ENCODE measurements at regions of chr19 and their contacts with region 1.

Region 1: DNA sequence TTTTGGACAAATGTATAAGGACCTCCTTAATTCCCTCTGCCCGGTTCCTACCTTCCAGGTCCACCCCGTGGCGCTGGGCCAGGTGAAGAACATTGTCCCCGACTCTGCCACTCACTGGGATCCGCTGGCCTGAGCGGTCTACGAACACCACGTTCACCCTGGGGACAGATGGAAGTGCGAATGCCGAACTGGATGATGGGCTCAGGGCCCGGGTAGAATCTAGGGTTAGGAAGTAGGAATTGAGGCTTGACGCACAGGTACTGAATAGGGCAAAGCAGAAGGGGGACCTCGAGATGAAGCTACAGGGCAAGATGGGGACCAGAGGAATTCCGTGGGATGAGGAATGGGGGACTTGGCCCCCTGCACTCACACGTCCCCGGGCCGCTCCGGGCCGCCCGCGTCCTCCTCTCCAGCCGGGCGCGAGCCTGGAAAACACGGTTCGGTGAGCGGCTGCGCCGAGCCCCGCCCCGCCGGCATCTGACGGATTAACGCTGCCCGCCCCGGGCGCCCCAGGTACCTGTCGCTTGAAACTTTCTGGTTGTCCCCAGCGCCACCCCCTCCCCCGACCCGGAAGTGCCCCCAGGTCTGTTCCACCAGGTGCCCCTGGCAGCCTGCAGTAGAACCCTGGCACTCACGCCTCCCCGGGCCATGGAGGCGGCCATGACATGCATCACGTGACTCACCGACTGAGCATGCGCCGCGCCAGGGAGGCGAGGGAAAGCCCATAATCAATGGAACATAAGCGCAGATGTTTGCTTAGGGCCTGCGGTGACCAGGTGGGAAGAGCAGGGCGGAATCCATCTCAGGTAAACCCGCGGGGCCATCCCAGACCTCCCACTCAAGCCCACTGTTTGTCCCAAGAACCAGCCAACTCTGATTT is at the start of gene FDX2:
- DNase-seq: peak in 1 of 2 donors; percentile 92
- H3K4me3 ChIP-seq: peak within 1 kb of the TSS; percentile 88 to 93
- H3K27ac ChIP-seq: no peak within 1 kb of the TSS
- H3K4me1 ChIP-seq: peaks cover 0 to 6% of the 10 kb centered on the region in 2 donors
- H3K27me3 ChIP-seq: no peaks in the 10 kb centered on the region
- CTCF ChIP-seq: peak in 1 of 3 experiments; percentile 4
- total RNA-seq, gene FDX2: 16.8 TPM

Region 2: GRCh38 chr19:10380313-10381102 is 64.9 kb after region 1 on chr19 and contains the start of gene TYK2:
- intact Hi-C with region 1: loop called (anchors 5 kb)
- DNase-seq: peak; percentile 96 to 98
- H3K4me3 ChIP-seq: peak within 1 kb of the TSS; percentile 86 to 98
- H3K27ac ChIP-seq: peak within 1 kb of the TSS; percentile 66 to 73
- H3K4me1 ChIP-seq: peaks cover 0 to 14% of the 10 kb centered on the region in 2 donors
- H3K27me3 ChIP-seq: no peaks in the 10 kb centered on the region
- CTCF ChIP-seq: no peak
- total RNA-seq, gene TYK2: 80.7 TPM

Region 3: GRCh38 chr19:10543420-10544241 is 228.1 kb after region 1 on chr19 and contains the start of gene ATG4D:
- intact Hi-C with region 1: no loop called
- DNase-seq: peak in 1 of 2 donors; percentile 88
- H3K4me3 ChIP-seq: peak within 1 kb of the TSS; percentile 98 to 100
- H3K27ac ChIP-seq: peak within 1 kb of the TSS; percentile 89 to 90
- H3K4me1 ChIP-seq: peaks cover 10 to 14% of the 10 kb centered on the region in 2 donors
- H3K27me3 ChIP-seq: no peaks in the 10 kb centered on the region
- CTCF ChIP-seq: no peak
- total RNA-seq, gene ATG4D: 11.0 TPM

Measured in ascending aorta (tissue), 2 donors.